ENCODE measurements at regions of chr11 and their contacts with region 1.

Region 1: GRCh38 chr11:129331871-129332274 is 43.8 kb upstream of the BARX2 start:
- DNase-seq: peak; percentile 89
- ATAC-seq: peak; percentile 92

Region 2: DNA sequence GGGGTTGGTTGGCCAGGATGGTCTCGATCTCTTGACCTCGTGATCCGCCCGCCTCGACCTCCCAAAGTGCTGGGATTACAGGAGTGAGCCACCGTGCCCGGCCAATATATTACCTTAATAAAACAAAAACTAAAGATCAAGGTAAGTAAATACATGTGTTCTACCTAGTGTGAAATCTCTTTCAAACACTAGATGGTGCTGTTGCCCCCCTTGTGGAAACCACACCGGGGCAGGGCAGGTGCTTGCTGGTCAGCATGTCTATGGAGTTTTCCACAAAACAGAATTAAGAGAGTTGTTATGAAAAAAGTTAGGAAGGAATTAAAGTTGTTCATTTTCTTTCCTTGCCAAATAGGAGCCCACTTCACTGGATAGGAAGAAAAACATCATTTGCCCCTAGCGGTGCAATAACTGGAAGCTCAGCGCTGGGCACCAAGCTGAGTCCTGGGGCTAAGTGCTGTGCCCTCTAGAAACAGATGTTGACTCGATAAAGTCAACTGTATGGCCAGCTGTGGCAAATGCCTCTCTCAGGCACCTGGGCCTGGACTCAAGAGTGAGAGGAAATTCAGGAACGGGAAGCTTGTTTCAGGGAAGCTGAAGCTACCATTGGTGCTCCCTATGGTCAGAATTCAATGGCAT is 447.1 kb before region 1 on chr11:
- intact Hi-C with region 1: loop called (anchors 10 kb)
- DNase-seq: no peak
- ATAC-seq: peak; percentile 80

Region 3: GRCh38 chr11:129117595-129118350 is 214.1 kb before region 1 on chr11:
- intact Hi-C with region 1: loop called (anchors 1 kb)
- DNase-seq: no peak
- ATAC-seq: no peak

Region 4: DNA sequence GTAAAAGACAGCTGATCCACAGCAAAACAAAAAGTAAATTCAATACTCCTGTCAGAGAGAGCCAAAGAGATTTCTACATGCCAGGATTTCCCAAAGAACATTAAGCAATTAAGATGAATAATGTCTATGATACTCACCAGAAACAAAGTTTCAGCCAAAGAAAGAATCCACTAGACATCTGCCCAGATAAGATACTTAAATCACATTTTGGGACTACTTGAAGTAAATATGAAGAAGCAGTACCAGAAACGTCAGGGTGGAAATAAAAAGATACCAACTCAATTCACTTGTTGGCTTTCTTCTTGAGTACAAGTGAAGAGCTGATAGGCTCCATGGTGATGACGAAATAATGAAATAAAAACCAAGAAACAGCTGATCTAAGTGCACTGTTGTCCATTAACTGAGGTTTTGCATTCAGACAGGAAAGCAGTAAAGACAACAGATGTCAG is 108.1 kb before region 1 on chr11:
- intact Hi-C with region 1: loop called (anchors 10 kb)
- DNase-seq: no peak
- ATAC-seq: peak; percentile 81

Region 5: GRCh38 chr11:129279326-129280026 is 52.4 kb before region 1 on chr11:
- intact Hi-C with region 1: loop called (anchors 5 kb)
- DNase-seq: peak; percentile 89
- ATAC-seq: peak; percentile 93

Measured in Right ventricle myocardium inferior (tissue), 1 donor.